BJ (cell line): ENCODE measurements at regions of chr19 and their contacts with region 1.

Region 1: GRCh38 chr19:9906475-9907087 is 29.7 kb downstream of the OLFM2 start:
- DNase-seq: no peak
- H3K4me3 ChIP-seq: no peak overlapping the region
- H3K27me3 ChIP-seq: peaks cover 4% of the 10 kb centered on the region
- CTCF ChIP-seq: no peak

Region 2: GRCh38 chr19:9891609-9892373 is 14.8 kb before region 1 on chr19:
- CTCF ChIA-PET with region 1: interaction called, 4 read pairs
- POLR2A ChIA-PET with region 1: interaction called, 10 read pairs
- DNase-seq: no peak
- H3K4me3 ChIP-seq: no peak overlapping the region
- H3K27me3 ChIP-seq: no peaks in the 10 kb centered on the region
- CTCF ChIP-seq: no peak